AG04450 (cell line): ENCODE measurements at regions of chr7 and their contacts with region 1.

Region 1: GRCh38 chr7:43582503-43583423 is at the start of gene STK17A:
- DNase-seq: peak; percentile 79
- H3K4me3 ChIP-seq: peak within 1 kb of the TSS; percentile 90
- H3K27ac ChIP-seq: peak within 1 kb of the TSS; percentile 82
- H3K27me3 ChIP-seq: no peaks in the 10 kb centered on the region
- CTCF ChIP-seq: peak; percentile 99
- polyA plus RNA-seq, gene STK17A: 29.5 and 39.7 TPM in 2 replicates

Region 2: DNA sequence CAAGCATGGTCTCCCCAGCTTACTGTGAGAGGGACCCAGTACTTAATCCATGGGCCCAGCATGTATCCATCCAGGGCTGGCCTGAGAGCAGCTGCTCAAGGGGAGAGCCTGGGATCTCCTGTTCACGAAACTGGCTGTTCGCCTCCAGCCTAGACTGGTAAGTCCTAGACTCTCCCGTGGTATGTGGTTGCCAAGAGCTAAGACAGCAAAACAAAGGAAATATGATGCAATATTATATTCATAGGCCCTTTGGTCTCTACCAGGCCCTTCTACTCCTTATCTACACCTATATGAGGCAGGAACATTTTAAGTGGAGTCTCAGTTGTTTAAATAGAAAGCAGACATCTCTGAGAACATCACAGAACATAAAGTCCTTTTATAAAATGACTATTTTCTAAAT is 28.8 kb before region 1 on chr7:
- CTCF ChIA-PET with region 1: interaction called, 13 read pairs
- POLR2A ChIA-PET with region 1: no interaction called
- DNase-seq: no peak
- H3K4me3 ChIP-seq: no peak overlapping the region
- H3K27ac ChIP-seq: no peak overlapping the region
- H3K27me3 ChIP-seq: peaks cover 27% of the 10 kb centered on the region
- CTCF ChIP-seq: no peak

Region 3: GRCh38 chr7:43602271-43602670 is 19.5 kb after region 1 on chr7:
- CTCF ChIA-PET with region 1: interaction called, 23 read pairs
- POLR2A ChIA-PET with region 1: interaction called, 5 read pairs
- DNase-seq: no peak
- H3K4me3 ChIP-seq: no peak overlapping the region
- H3K27ac ChIP-seq: no peak overlapping the region
- H3K27me3 ChIP-seq: no peaks in the 10 kb centered on the region
- CTCF ChIP-seq: no peak

Region 4: DNA sequence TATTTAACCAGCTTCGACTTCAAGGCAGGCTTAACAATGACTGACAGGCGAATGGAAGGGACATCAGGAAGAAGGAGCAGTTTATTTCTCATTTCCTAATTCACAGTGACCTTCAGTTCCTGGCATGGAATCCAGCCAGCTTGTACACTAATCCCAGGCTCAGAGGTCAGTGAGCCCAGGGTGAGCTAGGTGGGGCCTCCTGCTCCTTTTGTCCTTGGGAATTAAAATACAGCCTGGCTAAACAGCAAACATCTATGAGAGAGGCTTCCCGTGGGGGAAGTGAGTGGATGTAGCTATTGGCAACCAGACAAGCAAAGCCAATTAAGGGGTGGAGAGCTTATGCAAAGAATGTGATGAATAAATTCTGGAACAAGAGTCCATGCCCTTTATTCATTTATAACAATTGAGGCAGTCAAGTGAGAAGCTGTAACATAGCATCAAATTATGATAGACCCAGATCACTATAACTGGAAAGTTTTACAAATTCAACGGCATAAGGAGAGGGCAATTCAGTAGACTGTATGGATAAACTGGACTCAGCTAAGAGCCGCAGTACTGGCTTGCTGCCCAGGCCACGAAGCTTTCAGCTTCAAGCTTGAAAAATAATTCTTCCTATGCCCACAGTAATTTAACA is 57.2 kb after region 1 on chr7:
- CTCF ChIA-PET with region 1: interaction called, 31 read pairs
- POLR2A ChIA-PET with region 1: interaction called, 10 read pairs
- DNase-seq: no peak
- H3K4me3 ChIP-seq: no peak overlapping the region
- H3K27ac ChIP-seq: peak overlapping the region; percentile 78
- H3K27me3 ChIP-seq: no peaks in the 10 kb centered on the region
- CTCF ChIP-seq: no peak

Region 5: GRCh38 chr7:43686991-43687390 is 104.2 kb after region 1 on chr7:
- CTCF ChIA-PET with region 1: interaction called, 25 read pairs
- POLR2A ChIA-PET with region 1: interaction called, 3 read pairs
- DNase-seq: no peak
- H3K4me3 ChIP-seq: no peak overlapping the region
- H3K27ac ChIP-seq: no peak overlapping the region
- H3K27me3 ChIP-seq: no peaks in the 10 kb centered on the region
- CTCF ChIP-seq: no peak

Region 6: DNA sequence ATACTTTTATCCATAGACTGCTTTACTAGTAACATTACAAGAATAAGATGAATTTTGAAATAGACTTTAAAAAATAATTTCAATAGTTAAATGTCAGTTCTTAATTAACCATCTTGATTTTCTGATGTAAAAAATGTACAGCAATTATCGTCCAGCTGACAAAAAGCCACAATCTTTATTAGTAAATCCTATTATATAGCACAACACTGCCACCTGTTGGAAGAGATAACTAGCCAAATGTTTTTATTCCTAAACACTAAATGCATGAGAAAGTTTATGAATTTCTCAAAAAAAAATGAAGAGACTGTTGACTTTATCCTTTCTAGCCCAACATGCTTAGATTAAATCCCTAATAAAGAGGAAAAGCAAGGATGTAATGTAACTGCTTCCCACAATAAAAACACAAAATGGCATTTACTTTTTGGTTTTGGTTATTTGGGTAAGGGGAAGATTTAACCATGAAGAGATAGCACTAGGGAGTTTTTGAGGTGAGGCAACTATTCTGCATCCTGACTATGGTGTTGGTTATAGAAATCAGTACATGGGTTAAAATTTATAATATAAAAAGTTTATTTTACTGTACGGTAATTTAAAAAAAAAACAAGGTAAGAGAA is 138.5 kb after region 1 on chr7:
- CTCF ChIA-PET with region 1: interaction called, 139 read pairs
- POLR2A ChIA-PET with region 1: interaction called, 8 read pairs
- DNase-seq: no peak
- H3K4me3 ChIP-seq: no peak overlapping the region
- H3K27ac ChIP-seq: no peak overlapping the region
- H3K27me3 ChIP-seq: no peaks in the 10 kb centered on the region
- CTCF ChIP-seq: peak; percentile 64

Region 7: DNA sequence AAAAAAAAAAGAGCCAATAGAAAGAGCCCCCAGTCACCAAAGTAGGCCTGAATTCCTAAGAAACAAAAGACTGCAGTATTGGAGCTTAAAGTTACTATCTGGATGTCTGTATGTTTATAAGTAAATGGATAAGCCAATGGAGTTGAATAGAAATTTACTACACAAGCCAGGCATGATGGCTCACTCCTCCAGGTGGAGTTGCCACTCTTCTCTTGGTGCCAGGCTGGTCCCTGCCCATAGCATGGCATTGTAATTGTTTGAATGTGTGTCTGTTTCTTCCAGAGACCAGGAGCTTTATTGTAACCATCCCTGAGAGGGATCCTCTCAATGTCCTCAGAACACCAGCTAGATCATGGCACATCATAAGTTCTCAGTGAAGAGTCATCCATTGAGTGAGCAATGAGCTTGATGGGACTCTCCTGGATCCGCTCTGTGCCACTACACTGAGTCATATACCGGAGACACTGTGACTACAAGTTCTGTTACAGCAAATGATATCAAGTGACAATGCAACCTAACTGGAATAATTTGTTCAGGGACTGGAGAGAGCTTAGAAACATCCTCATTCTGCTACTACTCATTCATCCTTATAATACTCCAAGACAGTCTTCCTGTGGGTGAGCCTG is 261.4 kb after region 1 on chr7:
- CTCF ChIA-PET with region 1: interaction called, 98 read pairs
- POLR2A ChIA-PET with region 1: interaction called, 7 read pairs
- DNase-seq: no peak
- H3K4me3 ChIP-seq: no peak overlapping the region
- H3K27ac ChIP-seq: no peak overlapping the region
- H3K27me3 ChIP-seq: peaks cover 5% of the 10 kb centered on the region
- CTCF ChIP-seq: no peak